ENCODE measurements at regions of chr16 and their contacts with region 1.

Region 1: GRCh38 chr16:4253394-4254150 is 11.7 kb upstream of the SRL start:
- DNase-seq: peak; percentile 98

Region 2: GRCh38 chr16:3983081-3983520 is 270.5 kb before region 1 on chr16:
- CTCF ChIA-PET with region 1: interaction called, 10 read pairs
- POLR2A ChIA-PET with region 1: interaction called, 9 read pairs
- DNase-seq: peak; percentile 77

Region 3: DNA sequence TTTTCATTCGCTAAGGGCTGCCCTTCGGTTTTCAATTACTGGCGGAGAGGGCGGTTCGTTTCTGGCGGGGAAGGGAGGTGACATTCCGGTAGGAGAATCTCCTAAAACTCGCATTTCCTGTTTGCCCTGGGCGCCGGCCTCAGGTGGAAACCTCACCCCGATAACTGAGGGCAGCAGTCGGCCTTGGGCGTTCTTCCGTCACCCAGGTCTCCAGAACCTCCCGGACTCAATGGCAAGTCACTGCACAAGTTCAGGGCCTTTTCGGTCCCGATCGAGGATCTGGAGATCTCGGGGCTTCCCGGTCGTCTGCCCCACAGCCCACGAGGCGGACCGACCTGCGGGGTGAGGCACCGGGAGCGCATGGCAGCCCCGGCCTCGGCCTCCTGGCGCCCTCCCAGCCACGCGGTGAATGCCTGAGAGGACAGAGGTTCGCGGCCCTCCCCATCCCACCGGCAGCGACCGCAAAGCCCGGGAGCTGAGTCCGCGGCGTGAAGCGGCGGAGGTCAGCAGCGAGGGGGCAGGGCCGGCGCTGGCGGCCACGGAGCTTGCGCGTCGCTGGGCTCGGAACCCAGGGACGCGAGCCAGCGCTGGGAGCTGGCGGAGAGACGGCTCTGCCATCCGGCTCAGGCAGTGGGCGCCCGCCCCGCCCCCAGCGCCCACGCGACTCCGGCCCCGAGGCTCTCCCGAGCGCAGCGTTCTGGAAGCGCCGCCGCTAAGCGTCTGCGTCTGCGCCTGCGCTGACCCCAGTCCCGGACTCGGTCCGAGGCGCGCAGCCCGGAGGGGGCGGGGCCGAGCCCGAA is 70.1 kb before region 1 on chr16:
- CTCF ChIA-PET with region 1: interaction called, 4 read pairs
- POLR2A ChIA-PET with region 1: interaction called, 10 read pairs
- DNase-seq: peak; percentile 100

Region 4: GRCh38 chr16:4271176-4272066 is 17.8 kb after region 1 on chr16:
- CTCF ChIA-PET with region 1: interaction called, 8 read pairs
- POLR2A ChIA-PET with region 1: interaction called, 18 read pairs
- DNase-seq: peak; percentile 84